ENCODE measurements at regions of chr10 and their contacts with region 1.

Region 1: DNA sequence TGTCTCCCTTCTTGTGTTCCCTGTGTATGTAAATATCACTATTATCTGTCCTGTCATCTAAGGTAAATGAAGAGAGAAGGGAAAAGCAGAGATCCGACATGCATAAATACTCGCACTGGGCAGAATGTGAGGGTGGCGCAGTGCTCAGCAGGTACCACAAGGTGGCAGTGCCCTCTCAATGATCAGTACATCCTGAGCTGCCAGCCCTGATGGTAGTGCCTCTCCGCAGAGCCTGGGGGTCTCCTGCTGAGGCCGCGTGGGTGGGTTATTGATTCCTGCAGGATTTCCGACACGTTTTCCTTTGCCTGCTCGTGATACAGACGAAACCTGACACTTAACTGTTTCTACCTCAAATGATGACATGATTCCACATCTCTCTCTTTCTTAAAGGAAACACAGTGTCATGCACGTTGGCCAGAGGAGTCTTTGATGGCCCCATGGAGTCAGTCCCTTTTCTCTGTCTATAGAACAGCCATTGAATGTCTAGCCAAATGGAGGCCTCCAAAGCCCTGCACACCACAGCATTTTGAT is 19.8 kb downstream of the RGR start:
- DNase-seq: peak; percentile 82
- H3K4me3 Mint-ChIP-seq: no peak overlapping the region
- H3K27ac Mint-ChIP-seq: no peak overlapping the region
- H3K4me1 Mint-ChIP-seq: peaks cover 16% of the 10 kb centered on the region
- H3K27me3 Mint-ChIP-seq: peaks cover 29% of the 10 kb centered on the region

Region 2: DNA sequence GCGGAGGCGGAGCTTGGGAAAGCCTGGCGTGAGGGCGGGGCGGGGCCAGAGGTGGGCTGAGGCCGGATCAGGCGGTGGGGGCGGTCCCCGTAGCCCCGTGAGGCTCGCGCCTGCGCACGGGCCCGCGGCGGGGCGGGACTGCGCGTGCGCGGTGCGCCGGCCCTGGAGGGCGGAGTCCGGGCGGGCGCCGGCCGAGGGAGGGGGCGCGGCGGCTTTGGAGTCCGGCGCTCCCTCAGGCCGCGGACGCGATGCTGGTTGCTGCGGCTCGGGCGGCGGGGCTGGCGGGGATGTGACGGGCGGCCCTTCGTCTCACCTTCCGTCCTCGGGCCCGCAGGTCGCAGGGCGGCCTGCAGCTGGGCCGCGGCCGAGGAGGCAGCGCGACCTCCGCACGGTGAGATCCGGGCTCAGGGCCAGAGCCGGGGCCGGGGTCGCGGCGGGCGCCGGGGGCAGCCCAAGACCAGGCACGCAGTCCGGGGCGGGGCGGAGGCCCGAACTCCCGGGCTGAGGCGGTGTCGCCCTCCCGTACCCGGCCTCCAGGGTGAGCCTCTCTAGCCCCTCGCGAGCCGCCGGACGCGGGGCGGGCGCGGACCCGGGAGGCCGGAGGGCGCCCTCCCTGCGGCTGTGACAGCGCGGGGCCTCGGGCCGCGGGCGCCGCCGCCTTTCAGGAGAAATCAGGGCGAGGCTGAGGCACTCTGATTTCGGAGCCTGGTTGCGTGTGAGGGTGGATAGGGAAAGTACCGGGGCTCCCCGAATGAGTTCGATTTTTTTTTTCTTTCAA is 63.9 kb after region 1 on chr10 and contains the start of gene CCSER2:
- CTCF ChIA-PET with region 1: interaction called, 23 read pairs
- DNase-seq: peak; percentile 94
- H3K4me3 Mint-ChIP-seq: peak within 1 kb of the TSS; percentile 96
- H3K27ac Mint-ChIP-seq: peak within 1 kb of the TSS; percentile 99
- H3K4me1 Mint-ChIP-seq: peaks cover 32% of the 10 kb centered on the region
- H3K27me3 Mint-ChIP-seq: peaks cover 16% of the 10 kb centered on the region

Region 3: GRCh38 chr10:84341538-84341856 is 76.8 kb after region 1 on chr10:
- CTCF ChIA-PET with region 1: interaction called, 27 read pairs
- DNase-seq: peak; percentile 24
- H3K4me3 Mint-ChIP-seq: no peak overlapping the region
- H3K27ac Mint-ChIP-seq: peak overlapping the region; percentile 30
- H3K4me1 Mint-ChIP-seq: peaks cover 58% of the 10 kb centered on the region
- H3K27me3 Mint-ChIP-seq: no peaks in the 10 kb centered on the region

Region 4: GRCh38 chr10:84375011-84375410 is 110.3 kb after region 1 on chr10:
- CTCF ChIA-PET with region 1: interaction called, 16 read pairs
- DNase-seq: peak; percentile 44
- H3K4me3 Mint-ChIP-seq: no peak overlapping the region
- H3K27ac Mint-ChIP-seq: peak overlapping the region; percentile 16
- H3K4me1 Mint-ChIP-seq: peaks cover 15% of the 10 kb centered on the region
- H3K27me3 Mint-ChIP-seq: no peaks in the 10 kb centered on the region

Region 5: GRCh38 chr10:84440781-84441180 is 176.1 kb after region 1 on chr10:
- CTCF ChIA-PET with region 1: no interaction called
- DNase-seq: no peak
- H3K4me3 Mint-ChIP-seq: no peak overlapping the region
- H3K27ac Mint-ChIP-seq: no peak overlapping the region
- H3K4me1 Mint-ChIP-seq: no peaks in the 10 kb centered on the region
- H3K27me3 Mint-ChIP-seq: no peaks in the 10 kb centered on the region

Region 6: GRCh38 chr10:84531396-84531795 is 266.7 kb after region 1 on chr10:
- CTCF ChIA-PET with region 1: interaction called, 333 read pairs
- DNase-seq: no peak
- H3K4me3 Mint-ChIP-seq: no peak overlapping the region
- H3K27ac Mint-ChIP-seq: no peak overlapping the region
- H3K4me1 Mint-ChIP-seq: peaks cover 6% of the 10 kb centered on the region
- H3K27me3 Mint-ChIP-seq: peaks cover 4% of the 10 kb centered on the region

Measured in activated naive CD4-positive, alpha-beta T cell treated with anti-CD3 and anti-CD28 coated beads, Interleukin-2, amount 10 ng/mL, durations not matched to agents 7 days and 5 days (primary cell).